ENCODE measurements at regions of chr6 and their contacts with region 1.

Region 1: GRCh38 chr6:105077596-105078385 is 102.0 kb downstream of the POPDC3 start:
- DNase-seq: peak in 1 of 2 experiments; percentile 39
- H3K4me3 ChIP-seq: no peak overlapping the region
- H3K27ac ChIP-seq: no peak overlapping the region
- H3K4me1 ChIP-seq: peaks cover 16% of the 10 kb centered on the region
- H3K27me3 ChIP-seq: no peaks in the 10 kb centered on the region
- CTCF ChIP-seq: peak; percentile 81

Region 2: DNA sequence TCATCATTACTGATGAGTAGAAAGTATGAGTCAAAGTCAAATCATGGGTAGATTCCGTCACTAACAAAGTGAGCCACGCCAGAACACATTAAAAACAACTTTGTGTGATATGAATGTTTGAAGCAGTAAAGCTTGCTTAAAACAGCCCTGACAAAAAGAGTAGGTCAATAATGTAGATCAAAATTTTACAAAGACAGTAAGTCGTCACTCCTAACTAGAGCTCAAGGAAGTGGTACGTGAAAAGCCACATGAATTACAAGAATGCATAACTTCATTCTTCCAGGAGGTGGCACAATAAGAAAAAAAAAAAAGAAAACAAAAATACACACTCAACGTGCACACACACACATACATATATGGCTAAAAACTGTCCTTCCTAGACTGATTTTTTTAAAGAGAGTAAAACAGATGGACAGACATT is 288.0 kb before region 1 on chr6:
- CTCF ChIA-PET with region 1: no interaction called
- POLR2A ChIA-PET with region 1: interaction called, 27 read pairs
- intact Hi-C with region 1: loop called (anchors 5 kb)
- DNase-seq: peak in 1 of 2 experiments; percentile 50
- H3K4me3 ChIP-seq: no peak overlapping the region
- H3K27ac ChIP-seq: no peak overlapping the region
- H3K4me1 ChIP-seq: peaks cover 6% of the 10 kb centered on the region; the same call in 1 of the 2 replicates
- H3K27me3 ChIP-seq: no peaks in the 10 kb centered on the region
- CTCF ChIP-seq: peak; percentile 57

Region 3: GRCh38 chr6:104896914-104897313 is 180.9 kb before region 1 on chr6:
- CTCF ChIA-PET with region 1: no interaction called
- POLR2A ChIA-PET with region 1: no interaction called
- intact Hi-C with region 1: loop called (anchors 5 kb)
- DNase-seq: no peak
- H3K4me3 ChIP-seq: no peak overlapping the region
- H3K27ac ChIP-seq: no peak overlapping the region
- H3K4me1 ChIP-seq: no peaks in the 10 kb centered on the region
- H3K27me3 ChIP-seq: no peaks in the 10 kb centered on the region
- CTCF ChIP-seq: peak; percentile 65

Region 4: GRCh38 chr6:104940881-104941728 is 136.7 kb before region 1 on chr6:
- CTCF ChIA-PET with region 1: interaction called, 3 read pairs
- POLR2A ChIA-PET with region 1: no interaction called
- intact Hi-C with region 1: loop called (anchors 5 kb)
- DNase-seq: peak in 1 of 2 experiments; percentile 19
- H3K4me3 ChIP-seq: peak overlapping the region; percentile 45; the same call in 1 of the 2 replicates
- H3K27ac ChIP-seq: no peak overlapping the region
- H3K4me1 ChIP-seq: no peaks in the 10 kb centered on the region
- H3K27me3 ChIP-seq: no peaks in the 10 kb centered on the region
- CTCF ChIP-seq: peak; percentile 35; the same call in 1 of the 2 replicates